Gastrocnemius medialis (tissue), 4 donors: ENCODE measurements at regions of chr22 and their contacts with region 1.

Region 1: DNA sequence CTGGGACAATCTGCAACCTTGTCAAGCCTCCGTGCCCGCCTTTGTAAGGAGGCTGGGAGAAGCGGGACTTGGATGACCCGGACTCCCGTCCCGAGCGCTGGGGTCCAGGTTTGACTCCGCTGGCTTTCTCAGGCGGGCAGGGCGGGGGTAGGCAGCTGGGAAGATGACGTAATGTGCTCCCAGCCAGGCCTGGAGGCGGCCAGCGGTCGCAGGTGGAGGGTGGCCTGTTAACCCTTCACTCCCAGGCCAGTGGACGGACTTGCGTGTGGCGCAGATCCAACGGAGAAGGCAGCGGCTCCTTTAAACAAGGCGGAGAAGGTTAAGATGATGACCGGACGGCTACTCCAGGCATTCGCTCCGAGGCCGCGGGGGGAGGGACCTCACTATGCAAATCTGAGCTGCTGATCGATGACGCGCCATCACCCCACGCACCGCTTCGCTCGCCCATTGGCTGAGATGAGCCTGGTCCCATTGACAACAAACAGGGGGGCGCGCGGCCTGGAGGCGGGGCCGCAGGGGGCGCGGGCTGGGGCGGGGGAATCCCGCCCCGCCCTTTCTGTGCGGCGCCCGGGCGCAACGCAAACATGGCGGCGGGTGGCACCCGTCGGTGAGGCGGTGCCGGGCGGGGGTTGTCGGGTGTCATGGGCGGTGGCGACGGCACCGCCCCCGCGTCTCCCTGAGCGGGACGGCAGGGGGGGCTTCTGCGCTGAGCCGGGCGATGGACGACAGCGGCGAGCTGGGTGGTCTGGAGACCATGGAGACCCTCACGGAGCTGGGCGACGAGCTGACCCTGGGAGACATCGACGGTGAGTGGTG is at the start of gene SREBF2:
- DNase-seq: peak; percentile 100
- ATAC-seq: peak; percentile 93 to 98
- H3K4me3 ChIP-seq: peak within 1 kb of the TSS; percentile 75 to 94 (median 90)
- H3K27ac ChIP-seq: peak within 1 kb of the TSS; percentile 92 to 98 (median 98)
- H3K4me1 ChIP-seq: peaks cover 11 to 12% of the 10 kb centered on the region in 2 donors
- H3K27me3 ChIP-seq: no peaks in the 10 kb centered on the region
- CTCF ChIP-seq: peak in 1 of 5 experiments; percentile 4
- POLR2A ChIP-seq: peak; percentile 86 to 90
- total RNA-seq, gene SREBF2: 25.1 to 40.9 (median 36.1) TPM

Region 2: GRCh38 chr22:41688365-41689211 is 144.2 kb before region 1 on chr22 and contains the start of gene SNU13:
- in situ Hi-C with region 1: no loop called
- intact Hi-C with region 1: loop called (anchors 5 kb)
- DNase-seq: peak; percentile 87 to 90
- ATAC-seq: peak; percentile 98 to 99
- H3K4me3 ChIP-seq: peak within 1 kb of the TSS; percentile 74 to 93 (median 84)
- H3K27ac ChIP-seq: peak within 1 kb of the TSS; percentile 92 to 97 (median 94)
- H3K4me1 ChIP-seq: peaks cover 10 to 14% of the 10 kb centered on the region in 2 donors
- H3K27me3 ChIP-seq: no peaks in the 10 kb centered on the region
- CTCF ChIP-seq: peak in 1 of 5 experiments; percentile 16
- POLR2A ChIP-seq: peak; percentile 87 to 90
- total RNA-seq, gene SNU13: 177 to 202 (median 185) TPM

Region 3: DNA sequence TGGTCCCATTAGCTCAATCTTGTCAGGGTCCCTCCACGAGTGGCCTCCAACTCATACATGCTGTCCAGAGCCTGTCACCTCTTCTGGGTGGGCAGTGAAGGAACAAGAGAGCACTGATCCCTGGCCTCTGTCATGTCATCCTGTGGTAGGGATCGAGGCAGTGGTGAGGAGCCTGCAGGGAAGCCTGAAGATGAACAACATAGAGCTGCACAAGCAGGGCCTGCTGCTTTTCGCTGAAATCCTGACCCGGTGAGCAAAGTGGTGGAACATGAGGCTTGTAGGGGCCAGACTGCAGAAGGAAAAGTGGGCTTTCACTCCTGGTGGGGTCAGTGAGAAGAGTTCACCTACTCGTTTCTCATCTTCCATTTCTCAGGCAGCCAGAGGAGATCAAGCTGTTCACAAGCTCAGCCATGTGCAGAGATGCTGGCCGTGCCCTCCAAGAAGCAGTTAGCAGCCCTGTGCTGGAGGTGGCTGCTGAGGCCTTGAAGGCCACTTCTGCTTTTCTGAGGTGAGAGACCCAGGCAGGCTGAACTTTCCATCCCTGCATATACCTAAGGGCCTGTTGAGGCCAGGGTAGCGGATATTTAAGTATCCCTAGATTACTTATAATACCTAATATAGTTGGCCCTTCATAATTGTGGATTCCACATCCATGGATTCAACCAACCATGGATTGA is 100.5 kb before region 1 on chr22:
- in situ Hi-C with region 1: no loop called
- intact Hi-C with region 1: no loop called
- DNase-seq: no peak
- ATAC-seq: no peak
- H3K4me3 ChIP-seq: no peak overlapping the region
- H3K27ac ChIP-seq: no peak overlapping the region
- H3K4me1 ChIP-seq: no peaks in the 10 kb centered on the region
- H3K27me3 ChIP-seq: no peaks in the 10 kb centered on the region
- CTCF ChIP-seq: no peak
- POLR2A ChIP-seq: no peak

Region 4: DNA sequence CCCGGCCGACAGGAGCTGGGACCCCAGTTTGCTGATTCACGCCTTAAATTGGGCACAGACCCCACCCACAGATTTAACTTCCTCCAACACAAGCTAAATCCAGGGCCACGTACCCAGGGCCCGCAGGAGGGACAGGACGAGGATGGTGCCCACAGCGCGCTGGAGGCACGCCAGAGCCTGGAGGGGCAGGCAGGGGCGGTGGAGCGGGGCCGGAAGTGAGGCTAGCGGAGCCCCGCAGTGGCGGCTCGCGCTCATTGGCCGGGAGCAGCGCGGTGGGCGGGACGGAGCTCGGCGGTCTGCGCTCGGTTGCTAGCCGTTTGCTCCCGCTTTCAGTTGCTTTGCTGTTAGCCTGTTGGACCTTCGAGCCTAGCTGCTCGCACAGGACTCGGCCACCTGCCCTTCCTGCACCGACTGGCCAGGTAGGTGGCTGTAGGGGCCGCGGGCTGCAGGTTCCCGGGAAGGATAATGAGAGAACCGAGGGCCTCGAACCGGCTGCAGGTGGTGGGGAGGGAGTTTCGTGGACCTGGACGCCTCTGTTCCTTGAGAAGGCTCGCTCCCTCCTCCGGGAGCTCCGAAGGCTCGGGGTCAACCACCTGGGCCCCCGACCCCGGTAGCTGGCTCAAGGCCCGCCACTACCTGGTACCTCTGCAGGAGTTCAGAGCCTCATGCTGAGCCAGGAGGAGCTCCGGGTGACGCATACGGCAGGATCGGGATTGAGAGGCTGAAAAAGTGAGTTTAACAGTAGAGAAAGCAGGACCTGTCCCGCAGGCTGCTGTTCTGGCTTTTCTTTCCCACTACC is 32.2 kb before region 1 on chr22 and contains the start of gene CCDC134:
- in situ Hi-C with region 1: no loop called
- intact Hi-C with region 1: loop called (anchors 2 kb)
- DNase-seq: peak; percentile 80 to 89
- ATAC-seq: peak; percentile 89 to 91
- H3K4me3 ChIP-seq: peak within 1 kb of the TSS; percentile 72 to 95 (median 86)
- H3K27ac ChIP-seq: peak within 1 kb of the TSS; percentile 94 to 99 (median 96)
- H3K4me1 ChIP-seq: peaks cover 19 to 21% of the 10 kb centered on the region in 2 donors
- H3K27me3 ChIP-seq: no peaks in the 10 kb centered on the region
- CTCF ChIP-seq: no peak
- POLR2A ChIP-seq: peak; percentile 65 to 79
- total RNA-seq, gene CCDC134: 3.3 to 7.7 (median 6.0) TPM

Region 5: DNA sequence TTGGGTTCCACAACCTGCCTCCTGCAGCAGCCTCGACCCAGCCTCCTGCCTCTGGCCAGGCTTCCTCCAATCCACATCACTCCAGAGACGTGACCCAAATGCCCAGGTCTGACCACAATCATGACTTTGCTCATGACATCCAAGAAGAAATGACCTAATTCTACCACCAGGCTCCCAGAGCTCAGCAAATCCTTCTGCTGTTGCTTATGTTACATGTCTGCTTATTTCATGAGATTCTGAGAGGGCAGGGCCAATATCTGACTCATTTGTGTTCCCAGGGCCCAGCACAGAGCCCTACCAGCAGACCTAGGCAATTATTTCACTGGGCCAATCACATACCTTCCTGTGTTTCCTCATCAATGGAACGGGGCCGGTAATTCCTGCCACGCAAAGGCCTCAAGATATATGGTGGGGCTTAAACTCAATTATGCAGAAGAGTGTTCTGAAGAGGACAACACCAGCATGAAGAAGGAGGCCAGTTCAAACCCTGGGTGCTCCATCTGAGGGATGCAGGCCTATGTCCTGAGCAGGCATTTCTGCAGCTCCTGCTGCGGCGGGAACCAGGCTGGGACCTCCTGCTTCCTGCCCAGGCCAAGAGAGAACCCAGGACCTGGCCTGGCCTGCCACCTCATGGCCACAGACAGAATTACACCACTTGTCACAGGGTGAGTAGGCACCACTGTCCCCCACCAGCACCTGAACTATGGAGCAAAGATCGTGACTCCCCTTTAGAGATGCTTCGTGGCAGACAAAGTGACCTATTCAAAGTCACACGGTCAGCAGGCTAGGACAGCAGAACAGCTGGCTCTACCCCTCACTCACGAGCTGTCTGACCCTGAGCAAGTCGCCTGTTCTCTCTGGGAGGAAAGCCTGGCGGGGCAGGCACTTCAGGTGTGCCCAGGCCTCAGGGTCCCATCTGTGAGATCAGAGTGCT is 108.3 kb after region 1 on chr22:
- in situ Hi-C with region 1: loop called in 2 of 4 experiments (anchors 5 to 10 kb)
- intact Hi-C with region 1: no loop called
- DNase-seq: peak; percentile 61 to 81
- ATAC-seq: peak; percentile 63 to 79
- H3K4me3 ChIP-seq: no peak overlapping the region
- H3K27ac ChIP-seq: peak overlapping the region in 3 of 4 donors; percentile 29 to 57 (median 39)
- H3K4me1 ChIP-seq: peaks cover 3 to 33% of the 10 kb centered on the region in 2 donors
- H3K27me3 ChIP-seq: no peaks in the 10 kb centered on the region
- CTCF ChIP-seq: peak; percentile 94 to 98 (median 97)
- POLR2A ChIP-seq: no peak

Region 6: GRCh38 chr22:42079319-42080251 is 246.8 kb after region 1 on chr22 and contains the start of gene SMDT1:
- in situ Hi-C with region 1: no loop called
- intact Hi-C with region 1: loop called (anchors 2 kb)
- DNase-seq: peak; percentile 99
- ATAC-seq: peak; percentile 92 to 94
- H3K4me3 ChIP-seq: peak within 1 kb of the TSS; percentile 69 to 89 (median 86)
- H3K27ac ChIP-seq: peak within 1 kb of the TSS; percentile 95 to 100 (median 100)
- H3K4me1 ChIP-seq: peaks cover 30 to 37% of the 10 kb centered on the region in 2 donors
- H3K27me3 ChIP-seq: no peaks in the 10 kb centered on the region
- CTCF ChIP-seq: peak in 1 of 5 experiments; percentile 26
- POLR2A ChIP-seq: peak; percentile 97
- total RNA-seq, gene SMDT1: 7.9 to 14.6 (median 9.8) TPM